Calu3 (cell line): ENCODE measurements at regions of chrX and their contacts with region 1.

Region 1: DNA sequence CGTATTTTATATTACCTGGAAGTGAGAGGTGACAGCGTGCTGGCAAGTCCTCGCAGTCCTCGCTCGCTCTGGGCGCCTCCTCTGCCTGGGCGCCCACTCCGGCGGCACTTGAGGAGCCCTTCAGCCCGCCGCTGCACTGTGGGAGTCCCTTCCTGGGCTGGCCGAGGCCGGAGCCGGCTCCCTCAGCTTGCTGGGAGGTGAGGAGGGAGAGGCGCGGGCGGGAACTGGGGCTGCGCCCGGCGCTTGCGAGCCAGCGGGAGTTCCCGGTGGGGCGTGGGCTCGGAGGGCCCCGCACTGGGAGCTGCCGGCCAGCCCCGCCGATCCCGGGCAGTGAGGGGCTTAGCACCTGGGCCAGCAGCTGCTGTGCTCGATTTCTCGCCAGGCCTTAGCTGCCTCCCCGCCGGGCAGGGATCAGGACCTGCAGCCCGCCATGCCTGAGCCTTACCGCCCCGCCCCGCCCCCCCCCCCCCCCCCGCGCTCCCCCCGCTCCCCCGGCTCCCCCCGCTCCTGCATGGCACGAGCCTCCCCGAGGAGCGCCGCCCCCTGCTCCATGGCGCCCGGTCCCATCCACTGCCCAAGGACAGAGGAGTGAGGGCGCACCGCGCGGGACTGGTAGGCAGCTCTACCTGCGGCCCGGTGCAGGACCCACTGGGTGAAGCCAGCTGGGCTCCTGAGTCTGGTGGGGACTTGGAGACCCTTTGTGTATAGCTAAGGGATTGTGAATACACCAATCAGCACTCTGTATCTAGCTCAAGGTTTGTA is 298.9 kb upstream of the MAGEB16 start:
- DNase-seq: no peak
- H3K4me3 Mint-ChIP-seq: no peak overlapping the region
- H3K27ac Mint-ChIP-seq: no peak overlapping the region
- H3K4me1 Mint-ChIP-seq: peaks cover 19% of the 10 kb centered on the region
- H3K27me3 Mint-ChIP-seq: no peaks in the 10 kb centered on the region
- CTCF ChIP-seq: no peak

Region 2: DNA sequence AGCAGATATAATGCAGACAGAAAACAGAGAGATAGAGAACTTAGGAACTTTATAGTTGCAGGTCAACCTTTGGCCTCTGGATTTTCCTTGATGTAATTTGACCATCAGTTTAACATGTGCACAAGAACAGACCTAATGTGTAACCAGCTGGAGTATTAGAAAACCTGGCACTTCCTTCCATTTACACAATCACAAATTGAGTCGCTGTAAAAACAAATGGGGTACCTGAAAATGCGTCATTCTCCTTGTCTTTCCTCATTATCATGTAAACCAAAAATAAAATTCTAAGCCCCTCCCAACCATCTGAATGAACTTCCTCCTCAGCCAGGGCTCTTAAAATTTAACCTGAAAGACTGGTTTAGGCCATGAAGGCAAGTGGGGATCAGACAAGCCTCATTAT is 59.6 kb before region 1 on chrX:
- CTCF ChIA-PET with region 1: no interaction called
- intact Hi-C with region 1: loop called (anchors 1 kb)
- DNase-seq: peak; percentile 49
- H3K4me3 Mint-ChIP-seq: no peak overlapping the region
- H3K27ac Mint-ChIP-seq: peak overlapping the region; percentile 85
- H3K4me1 Mint-ChIP-seq: peaks cover 28% of the 10 kb centered on the region
- H3K27me3 Mint-ChIP-seq: no peaks in the 10 kb centered on the region
- CTCF ChIP-seq: no peak

Region 3: GRCh38 chrX:35625714-35626113 is 126.5 kb after region 1 on chrX:
- CTCF ChIA-PET with region 1: no interaction called
- intact Hi-C with region 1: no loop called
- DNase-seq: no peak
- H3K4me3 Mint-ChIP-seq: no peak overlapping the region
- H3K27ac Mint-ChIP-seq: no peak overlapping the region
- H3K4me1 Mint-ChIP-seq: peaks cover 10% of the 10 kb centered on the region
- H3K27me3 Mint-ChIP-seq: no peaks in the 10 kb centered on the region
- CTCF ChIP-seq: no peak